ENCODE measurements at regions of chr19 and their contacts with region 1.

Region 1: GRCh38 chr19:13262450-13262849 is 112.2 kb downstream of the IER2 start:
- DNase-seq: no peak
- ATAC-seq: peak; percentile 40
- H3K4me3 Mint-ChIP-seq: no peak overlapping the region
- H3K27ac Mint-ChIP-seq: no peak overlapping the region
- H3K4me1 Mint-ChIP-seq: peaks cover 14% of the 10 kb centered on the region
- H3K27me3 Mint-ChIP-seq: peaks cover 17% of the 10 kb centered on the region

Region 2: DNA sequence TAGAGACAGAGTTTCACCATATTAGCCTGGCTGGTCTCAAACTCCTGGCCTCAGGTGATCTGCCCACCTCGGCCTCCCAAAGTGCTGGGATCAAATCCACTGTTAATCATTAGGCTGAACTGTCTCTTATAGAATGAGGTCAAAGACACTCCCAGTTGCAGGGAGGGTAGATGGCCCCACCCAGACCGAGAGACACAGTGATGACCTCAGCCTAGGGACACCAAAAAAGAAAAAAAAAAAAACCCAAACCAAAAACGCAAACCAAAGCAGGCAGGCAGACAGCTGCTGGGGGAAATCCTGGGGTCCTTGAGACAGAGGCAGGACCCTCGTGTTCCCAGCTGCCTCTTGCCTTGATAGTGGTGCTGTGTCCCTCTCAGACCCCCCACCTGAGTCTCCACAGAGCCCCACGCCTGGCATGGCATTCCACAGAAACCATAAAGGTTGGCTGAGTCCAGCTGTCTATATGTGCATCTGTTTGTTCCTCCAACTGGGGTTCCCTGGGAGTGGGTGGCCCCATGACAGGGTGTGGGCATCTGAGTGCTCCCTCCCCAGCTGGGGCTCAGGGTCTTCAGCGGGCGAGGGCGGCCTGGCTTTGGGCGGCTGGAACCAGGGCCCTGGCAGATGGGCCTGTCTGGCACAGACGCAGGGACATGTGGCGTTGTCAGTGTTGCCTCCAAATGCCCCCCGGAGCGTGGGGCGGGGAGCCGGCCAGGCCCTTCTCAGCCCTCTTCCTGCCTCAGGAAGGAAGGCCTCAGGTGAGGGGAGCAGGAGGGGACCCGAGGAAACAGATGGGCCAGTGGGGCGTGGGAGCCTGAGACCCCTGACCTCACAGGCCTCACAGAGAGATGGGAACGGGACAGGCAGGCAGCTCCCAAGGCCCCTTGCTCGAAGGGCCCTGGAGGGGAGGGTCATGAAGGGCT is 287.9 kb before region 1 on chr19:
- CTCF ChIA-PET with region 1: interaction called, 3 read pairs
- POLR2A ChIA-PET with region 1: no interaction called
- intact Hi-C with region 1: loop called (anchors 1 to 5 kb)
- DNase-seq: no peak
- ATAC-seq: no peak
- H3K4me3 Mint-ChIP-seq: no peak overlapping the region
- H3K27ac Mint-ChIP-seq: no peak overlapping the region
- H3K4me1 Mint-ChIP-seq: peaks cover 8% of the 10 kb centered on the region
- H3K27me3 Mint-ChIP-seq: peaks cover 7% of the 10 kb centered on the region

Region 3: DNA sequence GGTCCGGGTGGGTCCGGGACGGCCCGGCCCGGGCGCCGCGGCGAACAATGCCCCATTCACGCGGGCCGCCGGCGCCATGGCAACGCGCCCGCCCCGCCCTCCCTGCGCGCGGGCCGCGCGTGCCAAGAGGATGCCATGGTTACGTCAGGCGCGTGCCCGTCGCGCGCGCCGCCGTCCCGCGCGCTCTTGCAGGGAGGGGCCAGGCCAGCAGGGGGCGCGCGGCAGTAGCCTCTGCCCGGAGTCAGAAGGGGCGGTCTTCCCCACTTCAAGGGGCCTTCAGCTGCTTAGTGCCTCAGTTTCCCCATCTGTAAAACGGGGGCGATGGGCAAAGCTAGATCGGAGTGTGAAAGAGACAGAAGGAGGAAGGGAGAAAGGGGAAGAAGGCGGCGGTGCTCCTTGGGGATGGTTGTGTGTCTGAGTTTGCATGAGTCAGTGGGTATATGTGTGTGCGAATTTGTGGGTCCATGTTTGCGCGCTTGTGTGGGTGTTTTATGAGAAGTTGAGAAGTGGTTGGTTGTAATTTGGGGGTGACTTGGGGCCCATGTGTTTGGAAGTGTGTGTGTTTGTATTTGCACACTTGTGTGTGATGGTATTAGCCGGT is 278.8 kb before region 1 on chr19:
- CTCF ChIA-PET with region 1: no interaction called
- POLR2A ChIA-PET with region 1: no interaction called
- intact Hi-C with region 1: loop called (anchors 1 to 5 kb)
- DNase-seq: peak; percentile 90
- ATAC-seq: peak; percentile 80
- H3K4me3 Mint-ChIP-seq: no peak overlapping the region
- H3K27ac Mint-ChIP-seq: no peak overlapping the region
- H3K4me1 Mint-ChIP-seq: no peaks in the 10 kb centered on the region
- H3K27me3 Mint-ChIP-seq: no peaks in the 10 kb centered on the region

Region 4: GRCh38 chr19:13069415-13070359 is 192.8 kb before region 1 on chr19:
- CTCF ChIA-PET with region 1: no interaction called
- POLR2A ChIA-PET with region 1: no interaction called
- intact Hi-C with region 1: no loop called
- DNase-seq: no peak
- ATAC-seq: no peak
- H3K4me3 Mint-ChIP-seq: no peak overlapping the region
- H3K27ac Mint-ChIP-seq: no peak overlapping the region
- H3K4me1 Mint-ChIP-seq: no peaks in the 10 kb centered on the region
- H3K27me3 Mint-ChIP-seq: no peaks in the 10 kb centered on the region

Region 5: DNA sequence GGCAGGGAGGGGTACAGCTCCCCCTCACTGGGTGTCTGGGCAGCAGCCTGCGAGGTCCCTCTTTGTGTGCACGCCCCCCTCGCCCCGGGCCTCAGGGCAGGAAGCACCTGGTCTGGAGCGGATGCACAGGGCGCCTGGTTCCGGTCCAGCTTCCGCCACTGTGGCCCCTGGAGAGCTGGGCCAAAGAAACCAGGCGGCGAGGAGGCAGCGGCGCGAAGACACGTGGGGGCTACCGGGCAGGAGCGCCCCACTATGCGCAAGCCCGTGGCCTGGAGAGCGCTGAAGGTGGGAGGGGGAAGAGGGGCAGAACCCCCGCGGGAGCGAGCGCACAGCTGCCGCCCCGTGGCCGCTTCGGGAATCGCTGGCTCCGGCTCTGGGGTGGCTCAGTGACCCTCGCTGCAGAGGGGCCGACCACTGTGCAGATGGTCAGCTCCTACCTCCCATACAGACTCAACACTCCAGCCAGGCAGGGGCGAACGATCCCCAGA is 158.0 kb before region 1 on chr19:
- CTCF ChIA-PET with region 1: interaction called, 4 read pairs
- POLR2A ChIA-PET with region 1: no interaction called
- intact Hi-C with region 1: loop called in 1 of 2 experiments (anchors 5 kb)
- DNase-seq: peak; percentile 84
- ATAC-seq: peak; percentile 48
- H3K4me3 Mint-ChIP-seq: peak overlapping the region; percentile 78
- H3K27ac Mint-ChIP-seq: peak overlapping the region; percentile 90
- H3K4me1 Mint-ChIP-seq: peaks cover 34% of the 10 kb centered on the region
- H3K27me3 Mint-ChIP-seq: no peaks in the 10 kb centered on the region

Region 6: GRCh38 chr19:13117772-13118423 is 144.6 kb before region 1 on chr19 and contains the start of gene NACC1:
- CTCF ChIA-PET with region 1: no interaction called
- POLR2A ChIA-PET with region 1: no interaction called
- intact Hi-C with region 1: loop called (anchors 5 kb)
- DNase-seq: peak; percentile 95
- ATAC-seq: peak; percentile 85
- H3K4me3 Mint-ChIP-seq: peak within 1 kb of the TSS; percentile 87
- H3K27ac Mint-ChIP-seq: peak within 1 kb of the TSS; percentile 95
- H3K4me1 Mint-ChIP-seq: peaks cover 49% of the 10 kb centered on the region
- H3K27me3 Mint-ChIP-seq: no peaks in the 10 kb centered on the region
- total RNA-seq, gene NACC1: 77.5 to 84.5 TPM

Region 7: GRCh38 chr19:13157167-13157831 is 105.2 kb before region 1 on chr19:
- CTCF ChIA-PET with region 1: no interaction called
- POLR2A ChIA-PET with region 1: no interaction called
- intact Hi-C with region 1: no loop called
- DNase-seq: no peak
- ATAC-seq: no peak
- H3K4me3 Mint-ChIP-seq: peak overlapping the region; percentile 87
- H3K27ac Mint-ChIP-seq: peak overlapping the region; percentile 94
- H3K4me1 Mint-ChIP-seq: peaks cover 37% of the 10 kb centered on the region
- H3K27me3 Mint-ChIP-seq: no peaks in the 10 kb centered on the region

Region 8: DNA sequence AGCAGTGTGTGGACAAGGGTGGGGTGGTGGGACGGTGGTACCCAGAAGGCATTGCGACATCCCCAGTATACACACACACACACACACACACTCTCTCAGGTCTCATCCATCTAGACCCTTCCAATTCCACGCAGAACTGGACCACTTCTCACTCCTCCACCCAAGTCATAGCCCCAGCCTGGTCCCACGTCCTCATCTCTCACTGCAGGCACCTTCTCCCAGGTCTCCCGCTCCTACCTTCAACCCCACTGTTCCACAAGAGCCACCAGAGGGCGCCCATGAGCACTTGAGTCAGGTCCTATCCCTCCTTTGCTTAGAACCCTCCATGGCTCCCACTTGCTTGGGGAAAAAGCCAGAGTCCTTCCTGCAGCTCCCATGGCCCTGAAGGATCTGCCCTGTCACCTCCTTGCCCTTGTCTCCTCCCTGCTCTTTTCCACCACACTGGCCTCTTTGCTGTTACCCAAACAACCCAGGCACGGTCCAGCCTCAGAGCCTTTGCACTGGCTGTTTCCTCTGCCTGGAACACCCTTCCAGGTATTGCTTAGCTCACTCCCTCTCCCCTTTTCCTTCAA is 49.6 kb before region 1 on chr19:
- CTCF ChIA-PET with region 1: interaction called, 4 read pairs
- POLR2A ChIA-PET with region 1: no interaction called
- intact Hi-C with region 1: loop called (anchors 1 to 5 kb)
- DNase-seq: peak; percentile 90
- ATAC-seq: peak; percentile 51
- H3K4me3 Mint-ChIP-seq: no peak overlapping the region
- H3K27ac Mint-ChIP-seq: no peak overlapping the region
- H3K4me1 Mint-ChIP-seq: peaks cover 32% of the 10 kb centered on the region
- H3K27me3 Mint-ChIP-seq: no peaks in the 10 kb centered on the region